ENCODE measurements at regions of chr19 and their contacts with region 1.

Region 1: DNA sequence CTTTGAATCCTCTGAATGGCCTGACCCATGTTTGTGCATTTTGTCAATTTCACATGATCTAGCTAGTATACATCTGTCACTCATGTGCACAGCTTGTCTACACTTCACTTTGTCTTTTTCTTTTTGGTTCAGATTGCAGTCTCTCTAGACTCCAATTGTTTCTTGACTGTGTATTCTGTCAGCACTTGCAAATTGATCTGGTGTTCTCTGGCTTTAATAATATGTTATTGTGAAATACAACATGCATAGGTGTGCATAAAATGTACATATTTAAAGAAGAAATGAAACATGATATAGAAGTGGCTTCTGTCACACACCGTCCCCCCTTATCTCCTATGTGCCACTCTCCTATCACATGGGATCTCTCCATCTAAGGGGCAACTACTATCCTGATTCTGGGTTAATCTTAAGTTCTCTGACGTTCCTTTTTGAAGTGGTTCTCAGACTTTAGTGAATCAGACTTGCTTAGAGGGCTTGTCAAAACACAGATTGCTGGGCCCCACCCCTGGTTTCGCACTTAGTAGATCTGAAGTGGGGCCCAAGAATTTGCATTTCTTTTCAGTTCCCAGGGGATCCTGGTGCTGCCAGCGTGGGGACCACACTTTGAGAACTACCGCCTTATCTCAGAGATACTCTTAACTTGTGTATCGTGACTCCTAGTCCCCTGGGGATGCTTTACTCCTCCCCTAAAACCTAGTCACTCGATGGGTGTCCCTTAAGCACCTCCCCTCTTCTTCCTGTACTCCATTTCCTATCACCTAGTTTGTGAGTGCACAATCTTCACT is 5.8 kb downstream of the KRTDAP start:
- DNase-seq: no peak
- H3K4me3 ChIP-seq: no peak overlapping the region
- CTCF ChIP-seq: no peak

Region 2: DNA sequence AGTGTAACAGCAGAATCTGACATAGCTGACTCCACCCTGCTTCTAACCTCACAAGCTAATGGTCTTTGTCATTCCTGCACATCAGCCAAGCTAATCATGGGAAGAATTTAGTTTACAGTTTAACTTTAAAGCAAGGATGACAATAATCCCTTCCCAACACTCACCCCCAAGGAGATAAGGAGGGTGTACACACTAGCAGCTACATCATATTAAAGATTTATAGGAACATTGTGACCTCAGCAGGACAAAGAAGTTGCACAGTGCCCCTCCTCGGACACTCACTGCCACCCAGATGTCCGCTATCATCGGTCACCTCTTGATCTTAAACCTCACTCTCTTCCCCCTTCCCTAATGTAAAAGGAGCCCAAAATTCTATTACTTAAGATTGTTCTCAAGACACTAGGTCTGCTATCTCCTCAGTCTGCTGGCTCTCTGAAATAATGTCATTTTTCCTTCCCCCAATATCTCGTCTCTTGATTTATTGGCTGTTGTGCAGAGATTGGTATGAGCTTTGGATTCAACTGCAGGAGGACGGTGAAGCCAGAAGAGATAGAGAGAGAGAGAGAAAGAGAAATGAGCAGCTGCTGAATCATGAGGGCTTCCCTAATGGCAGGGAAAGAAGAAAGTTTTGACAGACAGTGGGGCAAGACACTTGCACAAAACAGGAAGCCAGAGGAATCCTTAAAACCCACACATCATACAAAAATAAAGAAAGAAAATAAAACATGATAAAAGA is 53.9 kb before region 1 on chr19:
- in situ Hi-C with region 1: loop called (anchors 5 kb)
- DNase-seq: no peak
- H3K4me3 ChIP-seq: no peak overlapping the region
- CTCF ChIP-seq: no peak

Region 3: DNA sequence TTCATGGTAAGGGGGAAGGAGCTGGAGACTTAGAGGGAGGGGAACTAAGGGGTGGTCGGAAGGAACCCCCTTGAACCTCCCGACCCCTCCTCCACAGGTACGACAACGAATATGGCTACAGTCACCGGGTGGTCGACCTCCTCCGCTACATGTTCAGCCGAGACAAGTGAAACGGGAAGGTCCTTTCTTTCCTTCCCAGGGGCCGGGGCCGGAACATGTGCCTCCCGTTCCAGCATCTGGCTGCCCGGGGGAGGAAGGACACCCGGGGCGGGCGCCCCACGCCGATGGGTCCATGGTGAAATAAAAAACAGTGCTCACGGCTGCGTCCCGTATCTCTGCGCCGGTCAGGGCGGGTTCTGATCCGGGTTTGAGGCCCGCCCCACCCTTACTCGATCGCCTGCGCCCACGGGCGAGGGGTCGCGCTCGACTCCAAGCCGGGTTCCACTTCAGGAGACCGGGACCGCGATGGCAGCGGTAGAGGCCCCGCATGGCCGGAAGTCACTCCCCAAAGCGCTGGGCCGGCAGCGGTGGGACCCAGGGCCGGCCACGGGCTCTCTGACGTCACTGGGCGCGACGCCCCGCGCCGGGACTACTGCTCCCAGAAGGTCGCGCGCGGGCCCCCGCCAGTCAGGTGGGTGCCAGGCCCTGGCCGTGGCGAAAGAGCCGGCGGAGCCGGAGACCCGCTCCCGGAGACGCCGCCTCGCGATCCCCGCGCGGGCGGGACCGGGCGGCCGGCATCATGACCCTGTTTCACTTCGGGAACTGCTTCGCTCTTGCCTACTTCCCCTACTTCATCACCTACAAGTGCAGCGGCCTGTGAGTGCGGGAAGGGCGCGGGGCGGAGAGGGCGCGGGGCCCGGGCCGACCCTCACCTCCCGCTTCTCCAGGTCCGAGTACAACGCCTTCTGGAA is 60.8 kb after region 1 on chr19 and contains the start of gene TMEM147:
- in situ Hi-C with region 1: no loop called
- DNase-seq: peak; percentile 42
- H3K4me3 ChIP-seq: peak within 1 kb of the TSS; percentile 89
- CTCF ChIP-seq: no peak

Region 4: DNA sequence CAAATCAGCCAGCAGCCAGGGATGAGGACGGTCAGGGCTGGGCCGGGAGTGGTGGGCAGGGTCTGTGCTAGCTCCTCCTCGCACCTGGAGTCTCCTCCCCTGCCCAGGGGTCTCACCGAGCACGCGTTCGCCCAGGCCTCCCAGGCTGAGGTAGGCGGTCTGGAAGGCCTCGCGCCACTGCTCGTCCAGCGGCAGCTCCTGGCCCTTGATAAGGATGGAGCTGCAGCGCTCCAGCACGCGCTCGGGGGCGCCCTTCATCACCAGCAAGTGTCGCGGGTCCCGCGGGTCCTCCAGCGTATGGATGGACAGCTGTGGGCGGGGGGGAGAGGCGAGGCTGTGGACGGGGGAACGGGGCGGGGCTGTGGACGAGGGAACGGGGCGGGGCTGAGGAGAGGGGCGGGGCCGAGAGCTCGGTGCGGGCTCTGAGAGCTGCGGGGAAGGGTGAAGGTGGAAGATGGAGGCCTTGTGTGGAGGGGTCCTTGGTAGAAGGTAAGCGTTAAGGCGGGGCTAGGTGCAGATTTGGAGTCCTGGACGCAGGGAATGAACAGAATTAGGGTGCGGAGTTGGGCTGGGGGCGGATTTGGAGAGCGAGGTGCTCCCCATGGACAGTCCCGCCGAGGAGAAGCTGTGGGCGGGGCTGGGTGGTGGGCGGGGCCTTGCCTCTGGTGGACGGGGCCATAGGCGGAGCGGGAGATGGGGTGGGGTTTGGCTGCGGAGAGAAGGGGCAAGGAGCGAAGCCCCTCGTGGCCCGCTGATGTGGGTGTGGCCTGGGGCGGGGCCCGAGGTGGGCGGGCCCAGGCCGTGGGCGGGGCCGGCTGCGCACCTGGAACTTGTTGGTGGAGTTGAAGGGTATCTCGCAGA is 73.3 kb after region 1 on chr19:
- in situ Hi-C with region 1: no loop called
- DNase-seq: no peak
- H3K4me3 ChIP-seq: peak overlapping the region; percentile 36
- CTCF ChIP-seq: no peak

Region 5: GRCh38 chr19:35585848-35586247 is 101.4 kb after region 1 on chr19 and contains the start of gene PMIS2:
- in situ Hi-C with region 1: no loop called
- DNase-seq: no peak
- H3K4me3 ChIP-seq: no peak within 1 kb of the TSS
- CTCF ChIP-seq: no peak

Measured in astrocyte of the cerebellum (primary cell).